Adrenal gland (tissue), 19 donors: ENCODE measurements at regions of chr18 and their contacts with region 1.

Region 1: GRCh38 chr18:47345291-47345690 is 93.8 kb upstream of the SKOR2 start:
- DNase-seq: no peak
- H3K4me3 ChIP-seq: no peak overlapping the region
- H3K27ac ChIP-seq: no peak overlapping the region
- H3K4me1 ChIP-seq: no peaks in the 10 kb centered on the region
- H3K27me3 ChIP-seq: no peaks in the 10 kb centered on the region
- CTCF ChIP-seq: no peak
- POLR2A ChIP-seq: no peak

Region 2: DNA sequence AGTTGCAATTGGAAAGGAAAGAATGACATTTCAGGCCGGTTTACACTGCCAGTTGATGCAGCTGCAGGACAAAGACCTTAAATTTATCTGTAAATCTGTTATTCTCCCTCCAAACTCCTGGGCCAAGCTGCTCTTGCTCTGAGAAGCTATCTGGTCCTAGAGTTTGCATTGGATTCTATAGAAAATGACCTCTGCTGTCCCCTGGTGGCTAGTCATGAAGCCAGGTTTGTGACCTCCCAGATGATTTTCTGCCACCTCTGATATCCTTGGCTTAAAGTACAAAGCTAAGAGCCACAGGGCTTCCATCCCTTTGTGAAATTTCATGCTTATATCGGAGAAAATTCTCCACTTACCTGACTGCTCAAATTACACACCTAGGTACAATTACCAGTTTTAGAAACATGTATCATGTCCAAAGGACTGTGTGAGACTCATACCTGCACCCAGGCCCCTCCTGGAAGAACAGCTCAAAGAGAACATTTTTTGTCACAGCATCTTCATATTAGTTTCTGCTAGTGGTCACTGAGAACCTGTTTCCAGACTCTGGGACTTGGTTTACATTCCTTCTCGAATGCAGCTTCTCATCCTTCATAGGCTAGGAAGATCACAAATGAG is 140.3 kb before region 1 on chr18:
- intact Hi-C with region 1: no loop called
- DNase-seq: peak; percentile 26 to 72 (median 43)
- H3K4me3 ChIP-seq: no peak overlapping the region
- H3K27ac ChIP-seq: no peak overlapping the region
- H3K4me1 ChIP-seq: no peaks in the 10 kb centered on the region
- H3K27me3 ChIP-seq: peaks cover 9% of the 10 kb centered on the region
- CTCF ChIP-seq: peak; percentile 78 to 91 (median 86)
- POLR2A ChIP-seq: no peak

Region 3: DNA sequence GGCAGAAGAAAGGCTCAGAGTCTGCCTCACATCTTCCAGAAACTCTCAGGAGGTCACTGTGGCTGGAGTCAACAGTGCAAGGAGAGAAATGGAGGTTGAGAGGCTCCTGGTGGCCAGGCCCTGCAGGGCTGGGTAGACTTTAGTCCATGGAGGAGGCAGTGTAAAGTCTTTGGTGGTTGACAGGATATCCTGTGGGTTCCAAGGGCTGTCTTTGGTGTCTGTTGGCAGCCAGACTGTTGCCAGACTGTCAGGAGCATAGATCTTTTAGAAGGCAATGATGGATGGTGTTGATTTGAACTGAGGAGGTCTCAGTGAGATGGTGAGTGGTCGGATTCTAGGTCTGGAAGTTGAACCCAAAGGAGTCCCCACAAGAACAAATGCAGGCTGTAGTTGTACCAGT is 48.8 kb before region 1 on chr18:
- intact Hi-C with region 1: loop called in 1 of 2 experiments (anchors 10 kb)
- DNase-seq: no peak
- H3K4me3 ChIP-seq: no peak overlapping the region
- H3K27ac ChIP-seq: no peak overlapping the region
- H3K4me1 ChIP-seq: no peaks in the 10 kb centered on the region
- H3K27me3 ChIP-seq: peaks cover 3% of the 10 kb centered on the region
- CTCF ChIP-seq: no peak
- POLR2A ChIP-seq: no peak

Region 4: DNA sequence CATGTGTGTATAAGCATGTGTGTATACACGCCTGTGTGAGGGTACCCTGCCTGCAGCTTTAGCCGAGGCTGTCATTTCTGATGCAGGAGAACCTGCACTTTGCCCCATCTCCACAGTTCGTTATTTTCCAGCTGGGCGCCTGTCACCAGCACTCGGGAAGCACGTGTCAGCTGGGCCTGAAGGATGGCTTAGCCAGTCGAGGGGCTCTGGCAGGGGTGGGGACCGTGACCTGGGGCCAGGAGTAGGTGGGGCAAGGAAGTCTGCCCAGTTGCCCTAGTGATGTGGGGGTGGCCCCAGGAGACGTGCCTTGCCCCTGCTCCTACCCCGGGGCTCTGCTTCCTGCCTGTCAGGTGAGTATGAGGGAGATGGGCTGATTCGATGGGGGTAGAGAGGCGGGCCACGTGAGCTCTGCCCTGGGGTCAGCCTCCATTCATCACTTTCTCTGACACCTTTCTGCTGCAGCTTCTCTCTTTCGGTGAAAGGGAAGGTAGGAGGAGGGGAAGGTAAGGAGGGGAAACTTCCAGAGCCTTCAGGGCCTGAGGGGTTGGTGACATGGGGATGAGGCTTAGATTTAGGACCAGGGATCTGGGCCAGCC is 36.8 kb after region 1 on chr18:
- intact Hi-C with region 1: no loop called
- DNase-seq: no peak
- H3K4me3 ChIP-seq: no peak overlapping the region
- H3K27ac ChIP-seq: no peak overlapping the region
- H3K4me1 ChIP-seq: no peaks in the 10 kb centered on the region
- H3K27me3 ChIP-seq: no peaks in the 10 kb centered on the region
- CTCF ChIP-seq: no peak
- POLR2A ChIP-seq: no peak

Region 5: GRCh38 chr18:47618758-47619157 is 273.5 kb after region 1 on chr18:
- intact Hi-C with region 1: no loop called
- DNase-seq: no peak
- H3K4me3 ChIP-seq: no peak overlapping the region
- H3K27ac ChIP-seq: no peak overlapping the region
- H3K4me1 ChIP-seq: no peaks in the 10 kb centered on the region
- H3K27me3 ChIP-seq: no peaks in the 10 kb centered on the region
- CTCF ChIP-seq: no peak
- POLR2A ChIP-seq: no peak